ENCODE measurements at regions of chr4 and their contacts with region 1.

Region 1: DNA sequence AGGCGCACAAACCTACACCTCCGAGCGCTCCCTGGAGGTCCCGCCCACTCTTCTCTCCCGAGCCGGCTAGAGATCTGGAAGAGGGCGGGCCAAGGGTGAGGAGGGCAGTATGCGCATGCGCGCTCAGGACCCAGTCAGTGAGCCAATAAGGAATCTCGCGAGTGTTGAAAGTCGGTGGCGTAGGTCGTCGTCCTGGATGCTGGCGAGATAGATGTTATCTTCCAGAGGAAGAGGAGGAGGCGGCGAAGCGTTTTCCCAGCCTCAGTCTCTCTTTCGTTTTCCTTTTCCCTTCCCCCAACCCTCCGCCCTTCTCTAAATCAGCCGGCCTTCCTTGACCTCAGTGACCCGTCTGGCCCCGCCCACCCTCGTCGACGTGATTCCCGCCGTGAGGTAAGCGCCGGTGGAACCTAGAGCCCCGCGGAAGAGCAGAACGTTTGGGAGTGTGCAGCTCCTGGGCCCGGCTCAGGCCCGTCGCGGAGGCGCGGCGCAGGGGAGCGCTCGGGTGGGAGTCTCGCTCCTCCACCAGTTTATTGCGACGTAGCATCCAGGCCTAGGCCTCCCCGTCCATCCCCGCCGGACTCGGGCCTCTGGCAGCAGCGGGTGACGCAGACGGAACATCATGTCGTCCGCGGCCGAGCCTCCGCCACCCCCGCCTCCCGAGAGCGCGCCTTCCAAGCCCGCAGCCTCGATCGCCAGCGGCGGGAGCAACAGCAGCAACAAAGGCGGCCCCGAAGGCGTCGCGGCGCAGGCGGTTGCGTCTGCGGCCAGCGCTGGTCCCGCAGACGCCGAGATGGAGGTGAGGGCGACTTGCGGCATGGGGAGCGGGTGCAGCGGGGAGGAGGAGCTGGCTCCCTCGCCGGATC is at the start of gene SMARCA5:
- DNase-seq: peak; percentile 93 to 99 (median 98)
- ATAC-seq: peak; percentile 92
- H3K4me3 ChIP-seq: peak within 1 kb of the TSS; percentile 91
- H3K4me3 Mint-ChIP-seq: peak within 1 kb of the TSS; percentile 93 to 100 (median 98)
- H3K27ac ChIP-seq: peak within 1 kb of the TSS; percentile 98
- H3K27ac Mint-ChIP-seq: peak within 1 kb of the TSS; percentile 97 to 100 (median 100)
- H3K4me1 ChIP-seq: peaks cover 20 to 36% of the 10 kb centered on the region in 2 donors
- H3K4me1 Mint-ChIP-seq: peaks cover 22 to 54% (median 37%) of the 10 kb centered on the region in 7 donors
- H3K27me3 ChIP-seq: no peaks in the 10 kb centered on the region
- H3K27me3 Mint-ChIP-seq: peaks cover 0 to 30% (median 0%) of the 10 kb centered on the region in 5 donors
- total RNA-seq, gene SMARCA5: 48.3 to 58.2 (median 54.4) TPM

Region 2: DNA sequence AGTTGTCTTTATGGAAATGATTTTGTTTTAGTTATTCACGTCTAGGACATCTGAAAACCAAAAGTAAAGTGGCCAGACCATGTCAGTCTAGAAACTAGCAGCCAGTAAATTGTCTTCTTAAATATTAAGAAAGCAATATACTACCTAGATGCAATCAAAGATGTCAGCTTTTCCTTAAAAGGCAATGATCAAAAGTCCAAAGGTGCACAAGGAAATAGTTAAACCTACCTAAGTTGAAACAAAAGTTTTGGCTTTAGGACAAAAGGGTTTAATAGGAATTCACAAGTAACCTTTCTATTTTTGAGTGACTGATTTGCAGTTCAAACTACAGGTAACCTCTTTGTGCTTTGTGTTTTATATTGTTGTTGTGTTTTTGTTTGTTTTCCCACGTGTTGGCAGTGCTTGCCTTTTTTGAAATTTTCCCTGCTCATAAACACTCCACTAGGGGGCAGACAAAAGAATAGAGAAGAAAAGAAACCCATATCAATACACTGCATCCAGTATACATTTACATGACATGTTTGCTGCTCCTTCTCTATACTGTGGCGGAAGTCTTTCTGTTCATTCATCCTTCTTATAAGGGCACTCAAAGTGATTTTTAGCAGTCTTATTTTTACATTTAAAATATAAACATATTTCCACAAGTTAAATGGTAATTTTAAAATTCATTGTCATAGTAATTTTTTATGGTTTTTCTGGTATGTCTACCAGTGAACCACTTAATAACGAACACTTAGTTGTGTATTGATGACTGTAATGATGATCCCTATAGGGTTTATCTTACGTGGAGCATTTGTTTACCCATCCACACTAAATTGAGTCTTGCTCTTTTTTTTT is 114.2 kb before region 1 on chr4:
- CTCF ChIA-PET with region 1: no interaction called
- POLR2A ChIA-PET with region 1: no interaction called
- intact Hi-C with region 1: loop called (anchors 1 to 2 kb)
- DNase-seq: peak in 5 of 9 donors; percentile 10 to 26 (median 13)
- ATAC-seq: peak; percentile 81
- H3K4me3 ChIP-seq: no peak overlapping the region
- H3K4me3 Mint-ChIP-seq: no peak overlapping the region
- H3K27ac ChIP-seq: no peak overlapping the region
- H3K27ac Mint-ChIP-seq: no peak overlapping the region
- H3K4me1 ChIP-seq: peaks cover 0 to 5% of the 10 kb centered on the region in 2 donors
- H3K4me1 Mint-ChIP-seq: peaks cover 5 to 14% (median 11%) of the 10 kb centered on the region in 7 donors
- H3K27me3 ChIP-seq: no peaks in the 10 kb centered on the region
- H3K27me3 Mint-ChIP-seq: peaks cover 11 to 30% (median 16%) of the 10 kb centered on the region in 5 donors

Region 3: GRCh38 chr4:143524211-143524610 is 10.7 kb after region 1 on chr4:
- CTCF ChIA-PET with region 1: no interaction called
- POLR2A ChIA-PET with region 1: interaction called, 5 read pairs
- intact Hi-C with region 1: loop called (anchors 1 kb)
- DNase-seq: no peak
- ATAC-seq: no peak
- H3K4me3 ChIP-seq: no peak overlapping the region
- H3K4me3 Mint-ChIP-seq: no peak overlapping the region
- H3K27ac ChIP-seq: no peak overlapping the region
- H3K27ac Mint-ChIP-seq: peak overlapping the region in 1 of 9 donors; percentile 69
- H3K4me1 ChIP-seq: peaks cover 0 to 8% of the 10 kb centered on the region in 2 donors
- H3K4me1 Mint-ChIP-seq: peaks cover 27 to 63% (median 59%) of the 10 kb centered on the region in 7 donors
- H3K27me3 ChIP-seq: no peaks in the 10 kb centered on the region
- H3K27me3 Mint-ChIP-seq: no peaks in the 10 kb centered on the region

Region 4: DNA sequence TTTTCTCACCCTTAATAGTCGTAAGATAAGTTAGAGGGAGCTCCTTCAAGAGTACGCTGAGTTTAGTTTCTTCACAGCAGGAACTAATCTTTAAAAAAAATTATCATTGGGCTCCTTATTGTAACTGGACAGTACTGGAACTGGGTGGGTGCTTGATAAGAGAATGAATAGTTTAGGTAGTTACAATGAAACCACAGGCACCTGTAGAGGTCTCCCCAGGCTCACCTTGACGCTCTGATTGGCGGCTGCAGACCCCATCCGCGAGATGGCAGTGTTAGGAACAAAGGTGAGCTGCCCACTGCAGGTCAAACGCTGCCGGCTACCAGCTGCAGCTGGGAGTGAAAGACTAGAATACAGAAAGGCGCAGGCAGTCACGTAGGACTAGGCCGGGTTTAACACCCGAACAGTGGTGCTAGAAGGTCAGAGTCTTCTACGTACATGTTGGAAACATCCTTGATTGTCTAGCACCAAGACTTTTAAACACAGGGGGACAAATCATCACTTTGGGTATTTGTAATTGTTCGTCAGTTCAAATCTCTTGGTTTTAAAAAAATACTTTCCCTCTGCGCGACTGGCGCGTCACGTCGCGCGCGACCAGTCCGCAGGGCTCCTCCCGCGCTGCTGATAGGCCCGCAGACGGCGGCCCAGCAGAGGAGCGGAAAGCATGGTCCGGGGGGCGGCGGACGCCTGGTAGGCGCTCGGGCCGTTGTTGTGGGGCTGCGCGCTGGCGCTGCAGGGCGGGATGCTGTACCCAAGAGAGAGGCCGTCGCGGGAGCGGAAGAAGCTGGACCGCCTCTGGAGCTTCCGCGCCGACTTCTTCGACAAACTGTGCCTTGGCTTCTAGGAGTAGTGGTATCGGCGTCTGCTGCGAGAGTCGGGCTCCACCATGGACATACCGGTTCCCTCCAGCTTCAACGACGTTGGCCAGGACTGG is 45.6 kb after region 1 on chr4:
- CTCF ChIA-PET with region 1: interaction called, 3 read pairs
- POLR2A ChIA-PET with region 1: interaction called, 7 read pairs
- intact Hi-C with region 1: loop called (anchors 1 kb)
- DNase-seq: peak; percentile 38 to 80 (median 58)
- ATAC-seq: peak; percentile 86
- H3K4me3 ChIP-seq: peak overlapping the region; percentile 79
- H3K4me3 Mint-ChIP-seq: peak overlapping the region; percentile 87 to 97 (median 90)
- H3K27ac ChIP-seq: peak overlapping the region; percentile 52
- H3K27ac Mint-ChIP-seq: peak overlapping the region; percentile 78 to 96 (median 91)
- H3K4me1 ChIP-seq: peaks cover 7 to 11% of the 10 kb centered on the region in 2 donors
- H3K4me1 Mint-ChIP-seq: peaks cover 8 to 40% (median 28%) of the 10 kb centered on the region in 7 donors
- H3K27me3 ChIP-seq: no peaks in the 10 kb centered on the region
- H3K27me3 Mint-ChIP-seq: no peaks in the 10 kb centered on the region

Region 5: GRCh38 chr4:143616771-143617170 is 103.2 kb after region 1 on chr4:
- CTCF ChIA-PET with region 1: no interaction called
- POLR2A ChIA-PET with region 1: no interaction called
- intact Hi-C with region 1: no loop called
- DNase-seq: peak in 1 of 9 donors; percentile 26
- ATAC-seq: no peak
- H3K4me3 ChIP-seq: no peak overlapping the region
- H3K4me3 Mint-ChIP-seq: no peak overlapping the region
- H3K27ac ChIP-seq: no peak overlapping the region
- H3K27ac Mint-ChIP-seq: no peak overlapping the region
- H3K4me1 ChIP-seq: no peaks in the 10 kb centered on the region
- H3K4me1 Mint-ChIP-seq: peaks cover 0 to 5% (median 0%) of the 10 kb centered on the region in 7 donors
- H3K27me3 ChIP-seq: no peaks in the 10 kb centered on the region
- H3K27me3 Mint-ChIP-seq: peaks cover 0 to 18% (median 0%) of the 10 kb centered on the region in 5 donors

Measured in naive thymus-derived CD4-positive, alpha-beta T cell (primary cell).